ENCODE measurements at regions of chr1 and their contacts with region 1.

Region 1: DNA sequence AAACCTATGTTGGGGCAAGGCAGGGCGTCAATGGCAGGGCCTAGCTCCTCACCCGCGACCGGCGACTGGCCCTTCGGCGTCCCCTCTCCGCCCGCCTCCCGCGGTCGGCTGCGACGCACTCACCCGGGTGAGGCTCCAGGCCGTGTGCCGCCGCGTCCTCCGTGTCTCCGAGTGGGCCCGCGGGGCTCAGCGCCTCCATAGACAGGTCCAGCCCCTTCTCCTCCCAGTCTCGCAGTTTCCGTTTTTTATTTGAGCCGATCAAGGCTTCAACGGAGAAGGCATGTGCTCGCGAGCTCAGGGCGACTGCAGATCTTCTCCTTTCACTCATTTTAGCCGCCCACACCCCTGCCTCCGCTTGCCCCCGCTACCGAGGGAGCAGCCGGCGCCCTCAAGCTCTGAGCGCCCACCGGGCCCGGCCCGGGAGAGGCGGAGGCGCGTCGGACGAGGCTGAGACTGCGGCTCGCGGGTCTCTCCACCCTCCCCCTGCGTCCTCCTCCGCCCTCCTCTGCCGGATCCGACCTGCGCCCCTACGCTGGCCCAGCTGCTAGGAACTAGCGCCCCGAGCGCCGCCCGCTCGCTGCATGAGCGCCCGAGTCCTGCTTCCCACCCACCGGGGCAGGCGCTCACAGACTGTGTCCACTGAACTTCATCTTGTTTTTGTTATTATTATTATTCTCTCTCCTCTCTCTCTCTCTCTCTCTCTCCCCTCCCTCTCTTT is 516 bp downstream of the TBX15 start:
- DNase-seq: peak in 1 of 2 donors; percentile 64
- ATAC-seq: peak; percentile 45 to 53
- H3K4me3 ChIP-seq: peak overlapping the region; percentile 77 to 87 (median 83)
- H3K27ac ChIP-seq: peak overlapping the region; percentile 85 to 96 (median 94)
- H3K4me1 ChIP-seq: peaks cover 23 to 33% of the 10 kb centered on the region in 2 donors
- H3K27me3 ChIP-seq: no peaks in the 10 kb centered on the region
- CTCF ChIP-seq: peak in 1 of 5 experiments; percentile 10
- POLR2A ChIP-seq: peak; percentile 36 to 69

Region 2: GRCh38 chr1:117740496-117740895 is 1247.1 kb before region 1 on chr1:
- in situ Hi-C with region 1: no loop called
- intact Hi-C with region 1: no loop called
- DNase-seq: no peak
- ATAC-seq: no peak
- H3K4me3 ChIP-seq: no peak overlapping the region
- H3K27ac ChIP-seq: no peak overlapping the region
- H3K4me1 ChIP-seq: no peaks in the 10 kb centered on the region
- H3K27me3 ChIP-seq: no peaks in the 10 kb centered on the region
- CTCF ChIP-seq: no peak
- POLR2A ChIP-seq: no peak

Region 3: GRCh38 chr1:118294875-118295642 is 692.6 kb before region 1 on chr1:
- in situ Hi-C with region 1: loop called in 1 of 4 experiments (anchors 5 kb)
- intact Hi-C with region 1: loop called (anchors 5 kb)
- DNase-seq: peak; percentile 31 to 77
- ATAC-seq: peak; percentile 0 to 32
- H3K4me3 ChIP-seq: no peak overlapping the region
- H3K27ac ChIP-seq: peak overlapping the region; percentile 84 to 99 (median 89)
- H3K4me1 ChIP-seq: peaks cover 82% of the 10 kb centered on the region in 2 donors
- H3K27me3 ChIP-seq: no peaks in the 10 kb centered on the region
- CTCF ChIP-seq: no peak
- POLR2A ChIP-seq: no peak

Region 4: GRCh38 chr1:118862755-118863154 is 124.9 kb before region 1 on chr1:
- in situ Hi-C with region 1: no loop called
- intact Hi-C with region 1: no loop called
- DNase-seq: no peak
- ATAC-seq: no peak
- H3K4me3 ChIP-seq: no peak overlapping the region
- H3K27ac ChIP-seq: no peak overlapping the region
- H3K4me1 ChIP-seq: no peaks in the 10 kb centered on the region
- H3K27me3 ChIP-seq: no peaks in the 10 kb centered on the region
- CTCF ChIP-seq: no peak
- POLR2A ChIP-seq: no peak

Region 5: GRCh38 chr1:118878661-118879060 is 109.0 kb before region 1 on chr1:
- in situ Hi-C with region 1: no loop called
- intact Hi-C with region 1: loop called (anchors 5 kb)
- DNase-seq: no peak
- ATAC-seq: peak; percentile 17 to 38
- H3K4me3 ChIP-seq: no peak overlapping the region
- H3K27ac ChIP-seq: no peak overlapping the region
- H3K4me1 ChIP-seq: peaks cover 21 to 22% of the 10 kb centered on the region in 2 donors
- H3K27me3 ChIP-seq: no peaks in the 10 kb centered on the region
- CTCF ChIP-seq: no peak
- POLR2A ChIP-seq: no peak

Region 6: GRCh38 chr1:118934706-118935105 is 52.9 kb before region 1 on chr1:
- in situ Hi-C with region 1: loop called in 1 of 4 experiments (anchors 5 kb)
- intact Hi-C with region 1: no loop called
- DNase-seq: no peak
- ATAC-seq: no peak
- H3K4me3 ChIP-seq: no peak overlapping the region
- H3K27ac ChIP-seq: peak overlapping the region; percentile 40 to 83 (median 46)
- H3K4me1 ChIP-seq: peaks cover 56 to 71% of the 10 kb centered on the region in 2 donors
- H3K27me3 ChIP-seq: no peaks in the 10 kb centered on the region
- CTCF ChIP-seq: no peak
- POLR2A ChIP-seq: no peak

Region 7: GRCh38 chr1:118960026-118960561 is 27.5 kb before region 1 on chr1:
- in situ Hi-C with region 1: no loop called
- intact Hi-C with region 1: loop called (anchors 2 kb)
- DNase-seq: peak; percentile 56 to 73
- ATAC-seq: peak; percentile 21 to 26
- H3K4me3 ChIP-seq: peak overlapping the region in 1 of 4 donors; percentile 28
- H3K27ac ChIP-seq: peak overlapping the region; percentile 85 to 96 (median 94)
- H3K4me1 ChIP-seq: peaks cover 72 to 74% of the 10 kb centered on the region in 2 donors
- H3K27me3 ChIP-seq: no peaks in the 10 kb centered on the region
- CTCF ChIP-seq: no peak
- POLR2A ChIP-seq: no peak

Measured in gastrocnemius medialis (tissue), 4 donors.